GM12878 (cell line): ENCODE measurements at regions of chr1 and their contacts with region 1.

Region 1: DNA sequence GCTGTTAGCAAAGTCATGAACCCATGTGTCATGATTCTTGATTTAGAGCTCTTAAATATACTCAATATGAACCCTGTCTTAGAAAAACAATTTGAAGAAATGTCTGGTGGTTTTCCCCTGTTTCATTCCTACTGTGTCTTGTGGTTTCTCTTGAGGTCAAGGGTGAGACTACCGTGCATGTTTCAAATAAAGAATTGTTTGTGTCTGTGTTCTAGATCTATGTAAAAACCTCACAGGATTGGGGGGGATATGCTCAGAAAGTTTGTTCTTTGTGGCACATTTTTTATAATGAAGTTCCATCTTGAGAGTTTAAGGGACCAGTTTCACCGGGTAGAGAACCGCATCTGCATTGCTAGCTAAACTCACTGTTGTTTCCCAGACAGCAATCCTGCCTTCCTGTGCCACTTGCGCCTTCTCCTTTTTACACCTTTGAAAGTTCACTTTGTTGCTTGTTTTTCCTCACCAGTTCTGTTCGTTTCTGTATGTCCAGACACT is 30.9 kb upstream of the CACYBP start:
- DNase-seq: peak; percentile 79
- ATAC-seq: peak; percentile 78
- H3K4me3 ChIP-seq: no peak overlapping the region
- H3K27ac ChIP-seq: no peak overlapping the region
- H3K4me1 ChIP-seq: peaks cover 36% of the 10 kb centered on the region
- H3K27me3 ChIP-seq: no peaks in the 10 kb centered on the region
- CTCF ChIP-seq: no peak
- EP300 ChIP-seq: peak; percentile 93 to 95
- POLR2A ChIP-seq: no peak
- RAD21 ChIP-seq: no peak

Region 2: DNA sequence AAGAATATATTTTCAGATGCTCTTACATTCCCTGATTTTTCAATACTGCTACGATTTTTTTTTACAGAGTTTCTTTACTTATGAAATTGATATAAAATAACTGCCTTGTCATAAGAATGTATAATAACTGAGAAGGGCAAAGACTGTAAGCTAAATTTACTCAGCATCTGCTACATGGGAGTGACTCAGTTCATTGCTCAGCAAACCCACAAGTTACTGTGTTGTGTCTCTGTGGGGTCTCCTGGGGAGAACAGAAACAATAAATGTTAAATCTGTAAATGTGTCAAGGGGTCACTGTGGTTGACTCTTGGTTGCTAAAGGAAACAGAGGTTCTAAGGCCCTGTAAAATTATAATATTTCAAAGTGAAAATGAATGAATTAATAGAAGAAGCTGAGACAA is 179.4 kb before region 1 on chr1:
- CTCF ChIA-PET with region 1: no interaction called
- POLR2A ChIA-PET with region 1: interaction called, 6 read pairs
- RAD21 ChIA-PET with region 1: no interaction called
- SMC1A ChIA-PET with region 1: interaction called, 3 read pairs
- in situ Hi-C with region 1: no loop called
- intact Hi-C with region 1: loop called (anchors 5 kb)
- DNase-seq: peak; percentile 50
- ATAC-seq: peak; percentile 86
- H3K4me3 ChIP-seq: no peak overlapping the region
- H3K27ac ChIP-seq: no peak overlapping the region
- H3K4me1 ChIP-seq: peaks cover 32% of the 10 kb centered on the region
- H3K27me3 ChIP-seq: no peaks in the 10 kb centered on the region
- CTCF ChIP-seq: no peak
- EP300 ChIP-seq: peak; percentile 37 to 76; a peak in 2 of 4 replicates
- POLR2A ChIP-seq: no peak
- RAD21 ChIP-seq: no peak

Region 3: GRCh38 chr1:174815036-174815435 is 153.8 kb before region 1 on chr1:
- CTCF ChIA-PET with region 1: interaction called, 3 read pairs
- POLR2A ChIA-PET with region 1: no interaction called
- RAD21 ChIA-PET with region 1: interaction called, 6 read pairs
- SMC1A ChIA-PET with region 1: interaction called, 5 read pairs
- in situ Hi-C with region 1: no loop called
- intact Hi-C with region 1: loop called (anchors 1 kb)
- DNase-seq: peak; percentile 21
- ATAC-seq: peak; percentile 81
- H3K4me3 ChIP-seq: 0 out of 2 replicates have a peak overlapping the region, but pooled peaks have one; percentile 53
- H3K27ac ChIP-seq: peak overlapping the region; percentile 68
- H3K4me1 ChIP-seq: peaks cover 45% of the 10 kb centered on the region
- H3K27me3 ChIP-seq: no peaks in the 10 kb centered on the region
- CTCF ChIP-seq: no peak
- EP300 ChIP-seq: no peak
- POLR2A ChIP-seq: no peak
- RAD21 ChIP-seq: no peak

Region 4: DNA sequence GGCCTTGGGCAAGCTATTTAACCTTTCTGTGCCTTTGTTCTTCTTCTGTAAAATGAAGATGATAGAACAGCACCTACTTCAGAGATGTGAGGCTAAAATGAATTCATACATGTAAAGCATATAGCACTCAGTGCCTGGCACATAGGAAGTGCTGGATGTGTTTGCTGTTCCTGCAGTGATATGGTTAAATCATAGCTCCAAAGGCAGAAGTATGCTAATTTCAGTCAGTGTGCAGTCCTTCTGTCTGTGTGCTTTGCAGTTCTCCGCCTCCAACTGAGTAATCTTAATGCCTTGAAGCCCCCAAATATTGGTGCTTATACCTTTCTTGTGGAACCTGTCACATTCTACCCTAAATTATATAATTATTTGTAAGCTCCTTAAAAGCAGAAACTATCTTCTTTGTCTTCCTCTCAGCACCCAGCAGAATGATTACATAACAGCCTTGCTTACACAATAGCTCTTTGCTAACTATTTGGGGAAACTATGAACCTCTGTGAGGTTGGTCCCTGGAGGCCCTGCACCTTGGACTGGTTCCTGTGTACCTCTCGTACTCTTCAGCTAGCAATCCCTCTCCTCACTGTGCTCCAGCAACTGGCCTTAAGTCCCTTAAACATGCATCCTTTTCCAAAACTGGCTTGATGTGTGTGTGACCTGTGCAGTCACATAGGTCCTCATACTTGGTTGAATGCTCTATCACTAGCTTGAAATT is 26.1 kb before region 1 on chr1:
- CTCF ChIA-PET with region 1: interaction called, 3 read pairs
- POLR2A ChIA-PET with region 1: interaction called, 6 read pairs
- RAD21 ChIA-PET with region 1: interaction called, 9 read pairs
- SMC1A ChIA-PET with region 1: interaction called, 12 read pairs
- in situ Hi-C with region 1: no loop called
- intact Hi-C with region 1: no loop called
- DNase-seq: no peak
- ATAC-seq: no peak
- H3K4me3 ChIP-seq: no peak overlapping the region
- H3K27ac ChIP-seq: no peak overlapping the region
- H3K4me1 ChIP-seq: no peaks in the 10 kb centered on the region
- H3K27me3 ChIP-seq: no peaks in the 10 kb centered on the region
- CTCF ChIP-seq: no peak
- EP300 ChIP-seq: 0 out of 4 replicates have a peak, but pooled peaks of 1 of the 2 experiments have one; percentile 17
- POLR2A ChIP-seq: no peak
- RAD21 ChIP-seq: no peak

Region 5: DNA sequence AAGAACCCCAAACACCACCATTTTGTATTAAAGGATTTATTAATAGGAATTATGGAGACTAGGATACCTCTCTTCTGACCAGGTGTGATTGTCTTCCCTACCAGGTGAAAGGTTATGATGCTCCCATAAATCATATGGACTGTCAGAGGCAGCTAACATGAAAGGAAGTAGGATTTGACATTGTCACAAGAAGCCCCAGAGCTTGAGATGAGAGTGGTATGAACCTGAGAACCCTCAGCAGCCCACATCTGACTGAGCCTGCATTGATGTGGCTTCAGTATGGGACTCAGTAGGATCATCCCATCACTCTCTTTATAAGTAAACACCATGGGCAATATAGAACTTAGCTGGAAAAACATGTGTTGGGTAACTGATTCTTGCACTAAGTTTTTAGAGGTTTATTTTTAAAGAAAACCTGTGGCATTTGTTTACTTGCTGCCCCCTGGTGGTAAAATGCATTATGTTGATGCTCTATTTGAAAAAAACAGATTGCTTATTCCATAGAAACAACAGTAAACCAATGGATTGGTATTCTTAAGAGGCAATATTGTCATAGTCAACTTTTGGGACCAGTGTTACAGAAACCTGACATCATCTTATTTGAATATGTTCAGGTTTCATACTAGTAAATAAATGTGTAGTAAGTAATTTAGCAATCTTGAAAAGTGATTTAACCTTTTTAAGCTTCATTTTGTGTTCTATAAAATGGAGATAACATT is 14.3 kb after region 1 on chr1:
- CTCF ChIA-PET with region 1: interaction called, 19 read pairs
- POLR2A ChIA-PET with region 1: interaction called, 4 read pairs
- RAD21 ChIA-PET with region 1: interaction called, 4 read pairs
- SMC1A ChIA-PET with region 1: interaction called, 53 read pairs
- in situ Hi-C with region 1: no loop called
- intact Hi-C with region 1: no loop called
- DNase-seq: no peak
- ATAC-seq: no peak
- H3K4me3 ChIP-seq: no peak overlapping the region
- H3K27ac ChIP-seq: no peak overlapping the region
- H3K4me1 ChIP-seq: no peaks in the 10 kb centered on the region
- H3K27me3 ChIP-seq: no peaks in the 10 kb centered on the region
- CTCF ChIP-seq: peak; percentile 44 to 49 (median 49); a peak in 5 of 6 replicates
- EP300 ChIP-seq: no peak
- POLR2A ChIP-seq: no peak
- RAD21 ChIP-seq: peak; percentile 58

Region 6: DNA sequence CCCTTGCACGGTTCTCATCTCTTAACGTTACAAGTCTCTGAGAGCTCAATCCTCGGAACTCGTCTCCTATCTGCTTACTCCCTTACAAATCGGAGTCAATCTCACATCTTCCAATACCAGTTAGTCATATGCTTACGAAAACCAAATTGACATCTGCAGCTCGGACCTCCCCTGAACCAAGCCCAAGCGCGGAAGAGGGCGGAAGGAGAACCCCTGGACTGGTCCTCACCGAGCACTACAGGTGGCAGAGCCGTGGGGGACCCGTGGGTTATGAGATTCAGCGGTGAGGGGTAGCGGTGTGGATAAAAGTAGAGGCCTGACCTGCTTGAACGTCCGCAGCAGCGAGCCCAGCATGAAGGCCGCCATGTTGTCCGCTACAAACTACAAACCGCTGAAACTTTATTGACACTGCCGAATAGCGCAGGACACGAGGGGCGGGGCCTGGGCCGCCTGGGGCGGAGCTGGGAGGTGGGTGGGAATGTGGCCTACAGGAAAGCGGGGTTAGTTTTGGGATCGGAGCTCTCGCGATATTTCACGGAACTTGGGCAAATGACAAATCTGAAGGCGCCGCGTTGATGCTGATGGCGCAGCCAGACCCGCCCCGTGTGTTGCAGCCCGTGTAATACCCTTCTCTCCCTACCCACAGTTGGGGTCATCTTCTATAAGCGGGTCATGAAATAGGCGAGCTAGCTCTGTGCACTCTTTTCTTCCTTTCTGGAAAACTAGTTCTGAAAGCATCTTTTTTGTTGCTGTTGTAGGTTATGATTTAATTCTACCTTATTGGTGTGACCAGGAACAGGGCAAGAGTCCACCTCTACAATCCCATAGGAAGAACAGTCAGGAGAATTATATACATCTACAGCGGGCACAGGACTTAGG is 54.5 kb after region 1 on chr1 and contains the start of gene MRPS14:
- CTCF ChIA-PET with region 1: interaction called, 3 read pairs
- POLR2A ChIA-PET with region 1: interaction called, 10 read pairs
- RAD21 ChIA-PET with region 1: interaction called, 3 read pairs
- SMC1A ChIA-PET with region 1: interaction called, 4 read pairs
- in situ Hi-C with region 1: no loop called
- intact Hi-C with region 1: no loop called
- DNase-seq: peak; percentile 95
- ATAC-seq: peak; percentile 98
- H3K4me3 ChIP-seq: peak within 1 kb of the TSS; percentile 89
- H3K27ac ChIP-seq: peak within 1 kb of the TSS; percentile 90
- H3K4me1 ChIP-seq: no peaks in the 10 kb centered on the region; the same call in 1 of the 2 replicates
- H3K27me3 ChIP-seq: no peaks in the 10 kb centered on the region
- CTCF ChIP-seq: no peak
- EP300 ChIP-seq: no peak
- POLR2A ChIP-seq: peak; percentile 90
- RAD21 ChIP-seq: no peak
- polyA plus RNA-seq, gene MRPS14: 223 to 224 TPM